ENCODE measurements at regions of chr14 and their contacts with region 1.

Region 1: DNA sequence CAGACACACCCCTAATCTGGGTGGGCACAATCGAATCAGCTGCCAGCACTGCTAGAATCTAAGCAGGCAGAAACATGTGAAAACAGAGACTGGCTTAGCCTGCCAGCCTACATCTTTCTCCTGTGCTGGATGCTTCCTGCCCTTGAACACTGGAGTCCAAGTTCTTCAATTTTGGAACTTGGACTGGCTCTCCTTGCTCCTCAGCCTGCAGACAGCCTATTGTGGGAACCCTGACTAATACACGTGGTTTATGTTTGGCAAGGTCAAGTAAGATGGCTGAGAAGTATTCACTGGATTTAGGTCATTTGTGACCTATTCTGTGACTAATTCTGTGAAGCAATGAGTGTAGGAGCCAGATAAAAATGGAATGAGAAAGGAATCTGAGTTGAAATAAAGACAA is 11.0 kb downstream of the GPR135 start:
- DNase-seq: no peak
- H3K4me3 ChIP-seq: no peak overlapping the region
- H3K4me1 ChIP-seq: no peaks in the 10 kb centered on the region
- H3K27me3 ChIP-seq: no peaks in the 10 kb centered on the region

Region 2: DNA sequence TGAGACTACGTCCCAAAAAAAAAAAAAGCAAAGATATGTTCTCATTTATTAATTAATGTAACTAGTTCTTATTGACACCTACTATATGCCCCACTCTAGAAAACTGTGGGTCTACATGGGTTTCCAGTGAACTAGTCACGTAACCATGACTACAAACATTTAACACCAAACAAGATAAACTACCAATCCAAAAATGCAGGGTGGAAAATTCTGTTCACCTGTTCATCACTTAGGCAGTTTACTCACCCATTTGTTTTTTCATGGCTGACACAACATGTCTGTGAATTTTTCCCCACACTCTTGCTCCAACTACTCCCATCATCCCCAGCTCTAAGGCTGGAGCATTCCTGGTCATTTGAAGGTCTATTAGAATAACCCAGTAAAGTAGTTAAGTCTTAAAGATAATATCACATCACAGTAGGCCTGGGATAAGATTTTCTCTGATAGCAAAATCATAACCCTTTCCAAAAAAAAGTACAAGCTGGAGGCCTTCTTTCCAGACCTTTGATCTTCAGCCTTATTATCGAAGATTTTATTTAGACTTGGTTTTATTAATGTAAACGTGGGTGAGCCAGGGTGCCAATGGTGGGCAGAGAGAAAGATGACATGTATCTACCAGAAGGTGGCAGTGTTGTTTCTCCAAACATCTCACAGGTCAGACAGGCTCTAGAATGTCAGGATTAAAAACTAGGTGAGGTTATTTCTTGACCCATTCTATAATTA is 327.3 kb before region 1 on chr14:
- in situ Hi-C with region 1: loop called (anchors 5 kb)
- DNase-seq: peak; percentile 38 to 68
- H3K4me3 ChIP-seq: no peak overlapping the region
- H3K4me1 ChIP-seq: no peaks in the 10 kb centered on the region
- H3K27me3 ChIP-seq: peaks cover 3% of the 10 kb centered on the region; the same call in 1 of the 2 replicates

Region 3: GRCh38 chr14:59829469-59830337 is 375.6 kb after region 1 on chr14:
- in situ Hi-C with region 1: no loop called
- DNase-seq: no peak
- H3K4me3 ChIP-seq: no peak overlapping the region
- H3K4me1 ChIP-seq: no peaks in the 10 kb centered on the region
- H3K27me3 ChIP-seq: no peaks in the 10 kb centered on the region

Region 4: GRCh38 chr14:60331201-60332045 is 877.3 kb after region 1 on chr14:
- in situ Hi-C with region 1: no loop called
- DNase-seq: peak; percentile 51 to 89
- H3K4me3 ChIP-seq: no peak overlapping the region
- H3K4me1 ChIP-seq: no peaks in the 10 kb centered on the region
- H3K27me3 ChIP-seq: no peaks in the 10 kb centered on the region; the same call in 1 of the 2 replicates